Right ventricle myocardium inferior (tissue), 1 donor: ENCODE measurements at regions of chr15 and their contacts with region 1.

Region 1: DNA sequence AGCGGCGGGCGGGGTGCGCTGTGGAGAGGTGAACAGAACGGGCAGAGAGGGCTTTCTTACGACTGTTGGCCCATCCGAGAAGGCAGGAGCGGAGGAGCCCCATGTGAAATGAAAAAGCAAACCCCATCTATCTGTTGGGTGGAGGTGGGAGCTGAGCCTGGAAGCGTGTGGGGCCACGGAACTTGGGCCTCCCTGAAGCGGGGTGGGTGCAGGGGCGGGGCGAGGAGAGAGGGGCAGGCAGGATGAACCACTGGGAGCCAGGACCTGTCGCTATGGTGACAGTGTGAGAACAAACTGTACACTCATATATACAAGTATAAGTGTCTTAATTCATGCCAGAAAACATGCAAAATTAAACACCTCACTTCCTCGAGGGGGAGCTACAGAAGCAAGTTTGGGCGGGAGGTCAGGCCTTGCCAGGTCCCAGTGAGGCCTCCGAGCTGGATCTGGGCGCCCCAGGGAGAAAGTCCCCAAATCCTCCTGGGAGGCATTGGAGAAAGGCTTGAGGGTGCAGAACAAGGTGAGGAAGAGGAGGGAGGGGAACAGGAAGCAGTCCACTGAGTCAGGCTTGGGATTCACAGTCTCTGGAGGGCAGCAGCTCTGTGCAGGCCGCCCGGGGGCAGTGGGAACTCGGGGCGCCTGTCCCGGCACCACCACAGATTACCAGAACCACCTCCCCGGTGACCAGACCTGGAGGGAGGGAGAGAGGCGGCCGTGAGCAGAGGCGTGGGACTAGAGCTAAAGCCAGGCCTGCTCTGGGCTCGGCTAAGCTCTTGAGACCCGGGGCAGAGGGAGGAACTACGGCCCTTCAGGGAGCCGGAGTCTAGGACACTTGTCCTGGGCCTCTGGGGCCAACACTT is 34.8 kb downstream of the RBPMS2 start:
- DNase-seq: peak; percentile 84
- ATAC-seq: peak; percentile 94

Region 2: DNA sequence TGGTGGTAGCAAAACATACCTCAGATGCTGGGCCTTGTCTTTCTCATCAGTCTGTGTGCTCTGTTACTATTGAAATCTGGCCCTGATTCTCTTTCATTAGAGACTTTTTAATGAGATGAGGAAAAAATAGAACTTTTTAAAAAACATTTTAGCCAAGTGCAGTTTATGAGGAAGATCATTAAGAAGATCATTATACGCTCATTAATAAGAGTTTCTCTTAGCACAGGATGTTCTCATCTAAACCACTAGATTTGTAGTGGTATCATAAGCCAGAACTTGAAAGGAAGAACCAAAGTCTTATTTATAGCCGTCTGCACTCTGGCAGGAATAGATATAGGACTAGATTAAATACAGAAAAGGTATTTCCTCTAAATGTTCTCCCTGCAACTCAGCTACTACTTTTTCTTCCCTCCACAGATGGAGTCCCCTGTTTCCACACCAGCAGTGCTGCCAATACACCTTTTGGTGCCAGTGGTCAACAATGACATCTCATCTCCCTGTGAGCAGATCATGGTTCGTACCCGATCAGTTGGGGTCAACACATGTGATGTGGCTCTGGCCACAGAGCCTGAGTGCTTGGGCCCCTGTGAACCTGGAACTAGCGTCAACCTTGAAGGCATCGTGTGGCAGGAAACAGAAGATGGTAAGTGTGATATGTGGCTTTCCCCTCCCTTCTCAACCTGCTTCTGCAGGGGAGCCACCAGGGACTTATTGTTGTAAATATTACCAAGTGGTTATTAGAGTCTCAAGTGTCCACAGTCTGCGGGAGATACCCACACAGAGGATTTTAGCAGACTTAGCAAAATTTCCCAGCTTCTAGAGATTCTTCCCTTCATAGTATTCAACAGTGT is 117.9 kb before region 1 on chr15:
- intact Hi-C with region 1: no loop called
- DNase-seq: no peak
- ATAC-seq: no peak

Region 3: DNA sequence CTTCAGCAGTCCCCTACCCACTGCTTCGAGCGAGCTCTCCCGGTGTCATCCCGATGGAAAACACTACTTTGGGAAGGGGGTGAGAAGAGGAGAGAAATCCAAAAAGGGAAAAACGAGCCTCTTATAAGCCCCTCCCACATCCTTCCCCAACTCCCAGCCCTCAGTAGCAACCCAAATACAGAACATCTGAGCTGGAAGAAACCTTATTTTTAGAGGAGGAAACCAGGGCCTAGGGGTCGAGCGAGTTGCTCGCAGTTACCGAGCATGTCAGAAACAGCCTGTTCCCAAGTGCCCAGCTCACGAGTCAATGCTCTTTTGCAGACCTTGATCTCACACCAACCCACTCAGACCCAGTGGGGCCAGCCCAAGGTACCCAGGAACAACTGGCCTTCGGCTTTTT is 20.6 kb after region 1 on chr15:
- intact Hi-C with region 1: no loop called
- DNase-seq: no peak
- ATAC-seq: peak; percentile 43

Region 4: DNA sequence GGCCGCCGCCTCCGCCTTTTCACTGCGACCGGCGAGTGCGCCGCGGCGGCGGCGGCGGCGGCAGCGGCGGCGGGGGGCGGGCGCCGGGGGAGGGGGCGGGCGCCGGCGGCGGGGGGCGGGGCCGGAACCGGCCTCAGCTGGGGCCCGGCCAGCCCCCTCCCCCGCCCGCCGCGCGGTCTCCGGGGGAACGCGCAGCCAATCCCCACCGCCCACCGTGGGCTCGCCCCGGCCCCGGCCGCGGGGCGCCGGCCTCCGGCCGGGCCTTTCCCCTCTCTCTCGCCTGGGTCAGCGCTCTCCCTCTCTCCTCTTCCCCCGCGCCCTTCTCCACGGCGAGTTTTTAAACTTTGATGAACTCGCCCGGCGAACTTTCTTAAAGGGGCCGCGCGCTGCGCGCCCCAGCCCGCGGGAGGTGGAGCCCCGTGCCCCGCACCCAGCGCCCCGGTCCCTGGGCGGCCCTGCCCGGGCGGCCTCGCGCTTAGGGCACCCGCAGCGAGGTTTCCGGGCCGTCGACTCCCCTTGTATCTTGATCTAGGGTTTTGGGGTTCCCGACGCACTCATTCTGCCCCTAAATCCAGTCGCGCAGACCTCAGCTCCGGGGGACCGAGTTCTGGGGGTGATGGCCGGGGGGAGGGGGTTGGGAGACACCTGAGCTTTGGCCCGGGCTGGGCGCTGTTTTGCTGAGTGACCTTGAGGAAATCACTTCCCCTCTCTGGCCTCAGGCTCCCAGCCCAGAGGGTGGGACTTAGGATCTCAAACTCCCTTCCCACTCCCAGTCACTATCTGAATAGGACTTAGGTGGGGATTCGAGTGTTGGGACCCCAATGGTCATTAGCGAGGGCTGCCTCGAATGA is 35.2 kb after region 1 on chr15 and contains the start of gene RBPMS2:
- intact Hi-C with region 1: loop called (anchors 5 kb)
- DNase-seq: no peak
- ATAC-seq: peak; percentile 58
- total RNA-seq, gene RBPMS2: 255 TPM